ENCODE measurements at regions of chr5 and their contacts with region 1.

Region 1: DNA sequence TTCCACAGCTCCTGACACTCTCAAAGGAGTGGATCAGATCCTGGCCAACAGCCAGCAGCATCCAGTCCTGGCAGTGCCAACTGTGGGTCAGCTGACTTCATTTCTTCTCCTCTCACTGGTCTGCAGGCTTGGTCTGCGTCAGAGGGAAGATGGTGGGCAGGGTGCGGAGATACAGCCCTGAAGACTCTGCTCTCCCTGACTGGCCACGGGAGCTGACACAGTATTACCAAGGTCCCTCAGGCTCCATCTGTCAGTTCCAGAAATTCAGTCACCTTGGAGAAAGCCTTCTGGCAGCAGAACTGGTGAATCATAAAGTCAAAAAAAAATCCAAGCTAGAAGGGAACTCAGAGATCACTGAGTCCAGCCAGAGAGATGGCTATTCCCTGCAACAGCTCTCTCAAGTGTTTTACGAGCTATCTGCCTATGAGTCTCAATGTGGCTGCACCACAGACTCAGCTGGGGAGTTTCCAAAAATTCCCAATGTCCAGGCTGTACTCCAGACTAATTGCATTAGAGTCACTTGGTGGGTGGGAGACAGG is 28.0 kb downstream of the C1QTNF2 start:
- DNase-seq: no peak
- ATAC-seq: peak; percentile 47

Region 2: GRCh38 chr5:160021831-160022446 is 320.5 kb before region 1 on chr5:
- intact Hi-C with region 1: loop called (anchors 5 kb)
- DNase-seq: no peak
- ATAC-seq: peak; percentile 84

Region 3: DNA sequence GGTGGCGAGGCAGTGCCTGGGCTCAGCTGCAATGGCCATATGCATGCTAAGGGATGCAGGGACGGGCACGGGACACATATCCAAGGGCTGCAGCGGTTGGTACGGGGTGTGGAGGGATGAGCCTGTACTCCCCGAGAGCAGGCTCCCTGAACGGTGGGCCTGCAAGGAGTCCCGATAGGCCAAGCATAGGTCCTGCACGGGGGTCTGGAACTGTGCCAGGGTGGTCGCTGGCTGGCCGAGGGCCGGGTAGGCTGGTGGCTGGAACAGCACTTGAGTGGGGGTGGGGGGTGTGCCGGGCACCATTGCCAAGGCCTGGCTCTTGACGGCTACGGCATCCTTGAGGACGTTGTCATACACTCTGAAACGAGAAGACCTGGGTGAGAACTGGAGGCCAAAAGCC is 89.0 kb before region 1 on chr5:
- intact Hi-C with region 1: no loop called
- DNase-seq: no peak
- ATAC-seq: no peak

Measured in sciatic nerve (tissue), 2 donors.